Activated T-helper 1 cell treated with anti-CD3 and anti-CD28 coated beads, Interleukin-12 subunit alpha, Interleukin-12 subunit beta, Interleukin-2, Interleukin-4 antibody, amounts not matched to agents 30 ng/mL and 10 ng/mL and 1 ng/mL, durations not matched to agents 14 hours and 24 hours and 36 hours (primary cell): ENCODE measurements at regions of chr13 and their contacts with region 1.

Region 1: DNA sequence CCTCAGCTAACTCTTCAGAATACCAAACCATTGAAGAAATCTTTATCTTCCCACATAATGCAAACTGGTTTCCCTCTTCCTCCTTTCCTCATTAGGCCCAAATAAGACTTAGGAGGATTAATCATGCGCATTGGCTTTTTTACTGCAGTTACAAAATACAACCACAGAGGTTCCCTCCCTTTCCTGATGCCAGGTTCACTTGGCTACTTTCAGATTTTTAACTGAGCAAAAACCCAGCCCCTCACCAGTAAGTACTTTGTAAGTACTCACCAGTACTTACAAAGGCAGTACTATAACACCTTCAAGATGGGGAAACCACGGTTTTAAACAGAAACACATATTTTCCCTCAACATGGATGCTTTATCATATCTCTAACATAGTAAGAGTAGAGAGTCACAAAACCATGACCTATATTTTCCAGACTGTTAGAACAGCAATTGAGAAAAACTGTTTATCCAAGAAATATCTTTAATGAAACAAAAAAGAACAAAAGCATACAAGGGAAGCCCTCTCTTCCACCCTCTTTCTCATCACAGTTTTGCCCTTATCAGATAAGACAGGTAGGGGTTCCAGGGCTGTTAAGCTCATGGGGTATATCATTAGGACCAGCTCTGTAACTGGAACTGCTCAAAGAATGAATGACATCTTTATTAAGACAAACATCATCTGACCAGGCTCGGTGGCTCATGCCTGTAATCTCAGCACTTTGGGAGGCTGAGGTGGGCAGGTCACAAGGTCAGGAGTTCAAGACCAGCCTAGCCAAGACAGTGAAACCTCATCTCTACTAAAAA is 12.7 kb downstream of the FOXO1 start:
- DNase-seq: no peak
- H3K4me3 Mint-ChIP-seq: peak overlapping the region; percentile 60
- H3K27ac Mint-ChIP-seq: peak overlapping the region; percentile 87
- H3K4me1 Mint-ChIP-seq: peaks cover 89% of the 10 kb centered on the region
- H3K27me3 Mint-ChIP-seq: no peaks in the 10 kb centered on the region

Region 2: DNA sequence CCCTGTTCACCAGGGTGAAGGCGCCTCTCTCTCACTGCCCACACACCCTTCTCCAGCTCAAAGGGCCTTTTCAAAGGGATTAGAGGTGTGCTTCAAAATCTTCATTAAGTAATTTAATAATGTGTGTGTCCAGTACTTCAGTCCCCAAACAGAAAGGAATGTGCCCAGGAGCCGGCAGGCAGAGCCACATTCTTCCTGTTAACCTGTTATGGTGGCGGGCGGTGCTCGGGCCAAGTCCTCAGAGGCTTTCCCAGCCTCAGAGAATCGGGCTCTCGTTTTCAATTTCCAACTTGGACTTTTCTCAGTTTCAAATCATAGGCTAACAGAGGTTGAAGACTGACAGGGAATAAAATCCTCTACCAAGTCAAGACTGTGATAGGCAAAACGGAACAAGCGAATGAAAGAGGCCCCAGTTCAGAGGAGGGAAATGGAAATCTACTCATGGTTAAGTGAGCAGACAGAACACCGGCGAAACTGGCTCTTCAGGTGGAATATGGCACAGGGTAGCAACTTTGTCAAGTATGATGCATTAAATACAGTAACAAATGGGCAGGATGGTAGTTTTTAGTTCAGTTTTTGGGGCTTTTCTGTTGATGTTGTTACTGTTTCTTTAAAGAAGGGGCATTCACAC is 55.9 kb before region 1 on chr13:
- intact Hi-C with region 1: loop called (anchors 1 kb)
- DNase-seq: no peak
- H3K4me3 Mint-ChIP-seq: peak overlapping the region; percentile 6
- H3K27ac Mint-ChIP-seq: peak overlapping the region; percentile 10
- H3K4me1 Mint-ChIP-seq: peaks cover 75% of the 10 kb centered on the region
- H3K27me3 Mint-ChIP-seq: no peaks in the 10 kb centered on the region